Posterior cingulate gyrus (tissue), 11 donors: ENCODE measurements at regions of chr17 and their contacts with region 1.

Region 1: GRCh38 chr17:1153795-1154546 is 25.8 kb downstream of the ABR start:
- DNase-seq: peak; percentile 62 to 99 (median 86)

Region 2: DNA sequence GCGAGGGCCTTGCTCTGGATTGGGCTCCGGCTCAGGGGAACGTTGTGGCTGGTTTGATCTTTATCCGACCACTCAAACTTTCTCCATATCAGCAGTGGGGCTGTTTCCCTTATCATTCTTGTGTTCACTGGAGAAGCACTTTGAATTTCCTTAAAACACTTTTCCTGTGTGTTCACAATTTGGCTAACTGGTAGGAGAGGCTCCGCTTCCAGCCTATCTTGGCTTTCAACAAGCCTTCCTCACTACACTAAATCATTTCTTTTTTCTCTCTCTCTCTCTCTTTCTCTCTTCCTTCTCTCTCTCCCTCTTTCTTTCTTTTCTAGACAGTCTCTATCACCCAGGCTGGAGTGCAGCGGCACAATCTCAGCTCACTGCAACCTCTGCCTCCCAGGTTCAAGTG is 17.2 kb before region 1 on chr17:
- intact Hi-C with region 1: loop called (anchors 1 kb)
- DNase-seq: peak in 1 of 10 donors; percentile 7

Region 3: GRCh38 chr17:1168533-1169220 is 14.7 kb after region 1 on chr17:
- intact Hi-C with region 1: loop called (anchors 1 kb)
- DNase-seq: peak in 1 of 10 donors; percentile 83